Tibial artery (tissue), 4 donors: ENCODE measurements at regions of chr11 and their contacts with region 1.

Region 1: DNA sequence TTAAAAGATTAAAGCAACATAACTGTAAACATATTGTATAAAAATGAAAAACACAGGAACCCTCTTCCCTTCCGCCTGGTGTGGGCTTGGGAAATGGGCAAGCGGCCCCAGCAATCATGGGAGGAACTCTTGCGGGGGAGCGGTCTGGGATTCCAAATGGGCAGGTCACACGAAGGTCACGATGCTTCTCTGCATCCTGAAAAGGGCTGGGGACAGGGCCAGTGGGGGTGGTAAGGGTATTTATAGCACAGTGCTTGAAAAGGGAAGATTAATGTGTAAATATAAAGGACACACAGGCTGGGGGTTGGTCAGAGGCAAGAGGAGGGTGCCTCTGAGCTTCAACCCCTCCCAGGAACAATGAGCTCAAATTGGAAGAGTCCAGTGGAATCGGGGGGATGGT is 46.9 kb upstream of the OR4B1 start:
- DNase-seq: no peak
- H3K4me3 ChIP-seq: no peak overlapping the region
- H3K27ac ChIP-seq: no peak overlapping the region
- H3K4me1 ChIP-seq: peaks cover 0 to 26% (median 14%) of the 10 kb centered on the region in 4 donors
- H3K27me3 ChIP-seq: no peaks in the 10 kb centered on the region
- CTCF ChIP-seq: no peak

Region 2: DNA sequence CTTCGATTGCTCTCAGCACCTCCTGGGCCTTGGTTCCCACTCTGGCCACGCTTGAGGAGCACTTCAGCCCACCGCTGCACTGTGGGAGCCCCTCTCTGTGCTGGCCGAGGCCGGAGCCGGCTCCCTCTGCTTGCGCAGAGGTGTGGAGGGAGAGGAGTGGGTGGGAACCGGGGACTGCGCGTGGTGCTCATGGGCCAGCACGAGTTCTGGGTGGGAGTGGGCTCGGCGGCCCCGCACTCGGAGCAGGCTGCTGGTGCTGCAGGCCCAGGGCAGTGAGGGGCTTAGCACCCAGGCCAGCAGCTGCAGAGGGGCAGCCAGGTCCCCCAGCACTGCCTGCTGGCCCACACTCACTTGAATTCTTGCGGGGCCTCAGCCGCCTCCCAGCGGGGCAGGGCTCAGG is 59.0 kb after region 1 on chr11:
- intact Hi-C with region 1: loop called (anchors 10 kb)
- DNase-seq: no peak
- H3K4me3 ChIP-seq: no peak overlapping the region
- H3K27ac ChIP-seq: no peak overlapping the region
- H3K4me1 ChIP-seq: no peaks in the 10 kb centered on the region
- H3K27me3 ChIP-seq: no peaks in the 10 kb centered on the region
- CTCF ChIP-seq: no peak

Region 3: DNA sequence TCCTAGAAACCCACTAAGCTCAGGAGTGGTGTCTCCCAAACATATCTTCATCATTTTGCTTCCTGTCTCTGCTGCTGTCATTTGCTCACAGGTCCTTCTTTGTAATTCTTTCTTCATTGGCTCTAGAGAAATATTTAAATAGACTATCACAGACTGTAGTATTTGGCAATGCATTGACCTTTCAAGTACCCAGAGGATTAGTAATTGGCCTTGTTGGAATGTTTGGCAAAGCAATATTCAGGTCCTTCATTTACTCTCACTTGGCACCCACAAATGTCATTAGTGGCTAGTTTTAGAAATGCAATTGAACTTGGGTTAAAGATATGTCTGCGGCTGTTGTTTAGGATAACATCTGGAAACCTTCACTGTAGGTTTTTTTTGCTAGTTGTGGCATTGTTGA is 185.0 kb after region 1 on chr11:
- intact Hi-C with region 1: no loop called
- DNase-seq: no peak
- H3K4me3 ChIP-seq: no peak overlapping the region
- H3K27ac ChIP-seq: no peak overlapping the region
- H3K4me1 ChIP-seq: no peaks in the 10 kb centered on the region
- H3K27me3 ChIP-seq: no peaks in the 10 kb centered on the region
- CTCF ChIP-seq: no peak